ENCODE measurements at regions of chr11 and their contacts with region 1.

Region 1: GRCh38 chr11:119284344-119285157 is 32.4 kb downstream of the MCAM start:
- DNase-seq: no peak
- ATAC-seq: peak; percentile 88
- H3K4me3 Mint-ChIP-seq: no peak overlapping the region
- H3K27ac Mint-ChIP-seq: no peak overlapping the region
- H3K4me1 Mint-ChIP-seq: peaks cover 6% of the 10 kb centered on the region
- H3K27me3 Mint-ChIP-seq: no peaks in the 10 kb centered on the region
- CTCF ChIP-seq: no peak

Region 2: GRCh38 chr11:119144825-119145486 is 139.6 kb before region 1 on chr11:
- CTCF ChIA-PET with region 1: interaction called, 6 read pairs
- POLR2A ChIA-PET with region 1: no interaction called
- intact Hi-C with region 1: loop called (anchors 5 kb)
- DNase-seq: no peak
- ATAC-seq: peak; percentile 78
- H3K4me3 Mint-ChIP-seq: no peak overlapping the region
- H3K27ac Mint-ChIP-seq: no peak overlapping the region
- H3K4me1 Mint-ChIP-seq: peaks cover 12% of the 10 kb centered on the region
- H3K27me3 Mint-ChIP-seq: peaks cover 41% of the 10 kb centered on the region
- CTCF ChIP-seq: no peak

Region 3: GRCh38 chr11:119168471-119169281 is 115.9 kb before region 1 on chr11 and contains the start of gene NLRX1:
- CTCF ChIA-PET with region 1: interaction called, 8 read pairs
- POLR2A ChIA-PET with region 1: no interaction called
- intact Hi-C with region 1: loop called (anchors 1 kb)
- DNase-seq: peak; percentile 74
- ATAC-seq: peak; percentile 97
- H3K4me3 Mint-ChIP-seq: peak within 1 kb of the TSS; percentile 86
- H3K27ac Mint-ChIP-seq: peak within 1 kb of the TSS; percentile 50
- H3K4me1 Mint-ChIP-seq: peaks cover 5% of the 10 kb centered on the region
- H3K27me3 Mint-ChIP-seq: no peaks in the 10 kb centered on the region
- CTCF ChIP-seq: peak; percentile 69
- total RNA-seq, gene NLRX1: 9.8 TPM in 2 replicates

Region 4: GRCh38 chr11:119205574-119206510 is 78.7 kb before region 1 on chr11 and contains the start of gene CBL:
- CTCF ChIA-PET with region 1: interaction called, 23 read pairs
- POLR2A ChIA-PET with region 1: interaction called, 14 read pairs
- intact Hi-C with region 1: loop called (anchors 1 kb)
- DNase-seq: peak; percentile 95
- ATAC-seq: peak; percentile 86
- H3K4me3 Mint-ChIP-seq: peak within 1 kb of the TSS; percentile 96
- H3K27ac Mint-ChIP-seq: peak within 1 kb of the TSS; percentile 90
- H3K4me1 Mint-ChIP-seq: peaks cover 31% of the 10 kb centered on the region
- H3K27me3 Mint-ChIP-seq: no peaks in the 10 kb centered on the region
- CTCF ChIP-seq: no peak
- total RNA-seq, gene CBL: 26.2 and 27.8 TPM in 2 replicates

Region 5: GRCh38 chr11:119236490-119236889 is 48.1 kb before region 1 on chr11:
- CTCF ChIA-PET with region 1: no interaction called
- POLR2A ChIA-PET with region 1: no interaction called
- intact Hi-C with region 1: loop called (anchors 5 kb)
- DNase-seq: no peak
- ATAC-seq: no peak
- H3K4me3 Mint-ChIP-seq: no peak overlapping the region
- H3K27ac Mint-ChIP-seq: peak overlapping the region; percentile 13
- H3K4me1 Mint-ChIP-seq: peaks cover 24% of the 10 kb centered on the region
- H3K27me3 Mint-ChIP-seq: no peaks in the 10 kb centered on the region
- CTCF ChIP-seq: no peak

Region 6: GRCh38 chr11:119262668-119263351 is 21.7 kb before region 1 on chr11:
- CTCF ChIA-PET with region 1: interaction called, 6 read pairs
- POLR2A ChIA-PET with region 1: no interaction called
- intact Hi-C with region 1: loop called (anchors 2 kb)
- DNase-seq: no peak
- ATAC-seq: no peak
- H3K4me3 Mint-ChIP-seq: no peak overlapping the region
- H3K27ac Mint-ChIP-seq: no peak overlapping the region
- H3K4me1 Mint-ChIP-seq: peaks cover 48% of the 10 kb centered on the region
- H3K27me3 Mint-ChIP-seq: no peaks in the 10 kb centered on the region
- CTCF ChIP-seq: no peak

Region 7: GRCh38 chr11:119306373-119306890 is 21.9 kb after region 1 on chr11:
- CTCF ChIA-PET with region 1: no interaction called
- POLR2A ChIA-PET with region 1: no interaction called
- intact Hi-C with region 1: no loop called
- DNase-seq: no peak
- ATAC-seq: no peak
- H3K4me3 Mint-ChIP-seq: no peak overlapping the region
- H3K27ac Mint-ChIP-seq: no peak overlapping the region
- H3K4me1 Mint-ChIP-seq: no peaks in the 10 kb centered on the region
- H3K27me3 Mint-ChIP-seq: no peaks in the 10 kb centered on the region
- CTCF ChIP-seq: no peak